ENCODE measurements at regions of chr4 and their contacts with region 1.

Region 1: GRCh38 chr4:12723849-12724447 is 760.2 kb downstream of the RAB28 start:
- DNase-seq: peak in 1 of 5 donors; percentile 44
- ATAC-seq: peak in 1 of 4 donors; percentile 41
- H3K4me3 ChIP-seq: peak overlapping the region in 1 of 12 donors; percentile 28
- H3K27ac ChIP-seq: no peak overlapping the region
- H3K4me1 ChIP-seq: peaks cover 0 to 6% (median 0%) of the 10 kb centered on the region in 12 donors
- H3K27me3 ChIP-seq: peaks cover 0 to 5% (median 0%) of the 10 kb centered on the region in 9 donors
- CTCF ChIP-seq: peak in 3 of 12 donors; percentile 5 to 22 (median 14)
- POLR2A ChIP-seq: no peak

Region 2: DNA sequence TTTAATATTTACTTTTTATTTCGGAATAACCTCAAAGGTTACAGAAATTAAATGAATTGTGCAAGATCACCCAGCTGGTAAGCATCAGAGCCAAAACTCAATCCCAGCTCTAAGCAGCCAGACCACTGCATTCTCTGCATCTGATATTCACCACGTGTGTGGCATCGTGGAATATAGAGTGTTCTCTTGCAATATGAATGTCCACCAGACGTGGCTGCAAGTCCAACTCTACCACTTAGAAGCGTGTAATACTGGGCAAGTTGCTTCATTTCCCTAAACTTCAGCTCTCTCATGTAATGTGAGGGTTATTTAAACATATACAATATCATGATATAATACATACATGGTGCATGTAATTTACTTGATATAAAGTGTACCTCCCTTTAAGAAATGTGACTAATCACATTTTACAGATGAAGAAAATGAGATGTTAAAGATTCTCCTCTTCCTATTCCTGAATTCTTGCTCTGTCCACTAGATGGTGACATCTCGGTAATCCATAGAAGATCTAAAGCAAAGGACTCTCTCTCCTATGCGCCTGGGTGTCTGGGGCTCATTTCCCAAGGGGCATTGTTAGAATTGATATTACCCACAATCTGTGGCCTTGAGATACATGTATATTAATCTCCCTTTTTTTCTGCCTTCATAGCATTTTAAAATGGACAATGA is 44.9 kb before region 1 on chr4:
- intact Hi-C with region 1: loop called in 1 of 10 experiments (anchors 2 kb)
- DNase-seq: no peak
- ATAC-seq: no peak
- H3K4me3 ChIP-seq: no peak overlapping the region
- H3K27ac ChIP-seq: no peak overlapping the region
- H3K4me1 ChIP-seq: no peaks in the 10 kb centered on the region
- H3K27me3 ChIP-seq: no peaks in the 10 kb centered on the region
- CTCF ChIP-seq: peak in 6 of 12 donors; percentile 17 to 34 (median 22)
- POLR2A ChIP-seq: no peak

Measured in heart left ventricle (tissue), 16 donors.